Vagina (tissue), 2 donors: ENCODE measurements at regions of chr1 and their contacts with region 1.

Region 1: GRCh38 chr1:67347688-67348472 is 40.2 kb downstream of the IL12RB2 start:
- DNase-seq: no peak
- H3K4me3 ChIP-seq: no peak overlapping the region
- H3K27ac ChIP-seq: no peak overlapping the region
- H3K4me1 ChIP-seq: peaks cover 4% of the 10 kb centered on the region
- H3K27me3 ChIP-seq: no peaks in the 10 kb centered on the region
- CTCF ChIP-seq: peak; percentile 29 to 61 (median 52)
- POLR2A ChIP-seq: no peak

Region 2: GRCh38 chr1:67489643-67490042 is 141.8 kb after region 1 on chr1:
- intact Hi-C with region 1: loop called (anchors 5 kb)
- DNase-seq: no peak
- H3K4me3 ChIP-seq: no peak overlapping the region
- H3K27ac ChIP-seq: no peak overlapping the region
- H3K4me1 ChIP-seq: no peaks in the 10 kb centered on the region
- H3K27me3 ChIP-seq: no peaks in the 10 kb centered on the region
- CTCF ChIP-seq: peak in 1 of 3 experiments; percentile 16
- POLR2A ChIP-seq: no peak